PC-9 (cell line): ENCODE measurements at regions of chr7 and their contacts with region 1.

Region 1: DNA sequence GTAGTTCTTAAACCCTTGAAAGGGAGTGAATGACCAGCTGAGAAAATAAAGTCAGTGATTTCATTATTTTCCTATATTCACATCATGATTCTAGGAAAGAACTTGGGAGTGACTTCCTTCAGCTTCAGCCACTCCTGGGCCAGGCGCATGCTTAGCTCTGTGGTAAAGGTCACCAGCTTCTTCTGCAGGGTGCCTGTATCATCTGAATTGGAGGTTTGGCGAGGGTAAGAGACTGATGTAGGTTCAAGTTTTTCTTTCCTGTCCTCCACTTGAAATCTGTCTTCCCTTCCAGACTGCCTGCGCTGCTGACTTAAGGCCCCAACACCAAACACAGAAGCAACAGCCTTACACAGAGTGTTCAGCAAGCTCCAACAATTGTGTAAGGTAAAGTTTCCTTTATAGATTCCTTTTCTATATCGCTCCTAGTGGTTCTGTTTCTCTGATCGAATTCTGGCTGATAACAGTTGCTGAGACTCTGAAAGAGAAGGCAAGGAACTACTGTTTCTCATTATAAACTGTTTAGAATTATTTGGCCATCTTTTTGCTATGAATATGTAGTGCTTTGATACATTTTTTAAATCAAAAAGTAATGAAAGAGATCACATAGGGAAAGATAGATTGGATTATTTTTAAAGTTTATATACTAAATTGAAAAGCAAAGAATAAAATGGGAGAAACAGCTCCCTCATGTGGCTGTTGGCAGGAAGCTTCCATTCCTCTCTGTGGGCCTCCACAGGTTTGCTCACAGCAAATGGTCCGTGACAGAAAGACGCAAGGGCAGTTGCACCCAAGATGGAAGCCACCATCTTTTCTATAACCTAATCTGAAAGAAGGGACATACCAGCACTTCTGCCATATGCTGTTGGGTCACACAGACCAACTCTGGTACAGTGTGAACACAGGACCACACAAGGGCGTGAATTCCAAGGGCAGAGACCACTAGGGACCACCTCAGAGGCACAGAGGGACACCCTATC is 14.0 kb downstream of the GATAD1 start:
- DNase-seq: peak in 1 of 2 experiments; percentile 29
- H3K4me3 ChIP-seq: no peak overlapping the region
- H3K27ac ChIP-seq: no peak overlapping the region
- H3K4me1 ChIP-seq: peaks cover 34% of the 10 kb centered on the region
- H3K27me3 ChIP-seq: no peaks in the 10 kb centered on the region
- CTCF ChIP-seq: peak; percentile 81

Region 2: GRCh38 chr7:93390660-93391059 is 929.3 kb after region 1 on chr7:
- CTCF ChIA-PET with region 1: interaction called, 10 read pairs
- POLR2A ChIA-PET with region 1: no interaction called
- intact Hi-C with region 1: no loop called
- DNase-seq: no peak
- H3K4me3 ChIP-seq: no peak overlapping the region
- H3K27ac ChIP-seq: no peak overlapping the region
- H3K4me1 ChIP-seq: no peaks in the 10 kb centered on the region
- H3K27me3 ChIP-seq: no peaks in the 10 kb centered on the region
- CTCF ChIP-seq: no peak